Gastrocnemius medialis (tissue), 4 donors: ENCODE measurements at regions of chr6 and their contacts with region 1.

Region 1: GRCh38 chr6:41895300-41896233 is at the start of gene USP49:
- DNase-seq: peak; percentile 83 to 84
- ATAC-seq: peak; percentile 96 to 97
- H3K4me3 ChIP-seq: peak within 1 kb of the TSS; percentile 69 to 91 (median 76)
- H3K27ac ChIP-seq: peak within 1 kb of the TSS; percentile 84 to 91 (median 86)
- H3K4me1 ChIP-seq: peaks cover 8 to 22% of the 10 kb centered on the region in 2 donors
- H3K27me3 ChIP-seq: no peaks in the 10 kb centered on the region
- CTCF ChIP-seq: no peak
- POLR2A ChIP-seq: peak in 1 of 2 donors; percentile 41
- total RNA-seq, gene USP49: 0.27 to 2.8 (median 1.1) TPM

Region 2: GRCh38 chr6:41941280-41942066 is 45.9 kb after region 1 on chr6 and contains the start of gene CCND3:
- in situ Hi-C with region 1: no loop called
- intact Hi-C with region 1: loop called (anchors 1 kb)
- DNase-seq: peak; percentile 78 to 84
- ATAC-seq: peak; percentile 92 to 94
- H3K4me3 ChIP-seq: peak within 1 kb of the TSS; percentile 66 to 97 (median 72)
- H3K27ac ChIP-seq: peak within 1 kb of the TSS; percentile 67 to 79 (median 74)
- H3K4me1 ChIP-seq: peaks cover 21 to 33% of the 10 kb centered on the region in 2 donors
- H3K27me3 ChIP-seq: no peaks in the 10 kb centered on the region
- CTCF ChIP-seq: peak in 1 of 5 experiments; percentile 16
- POLR2A ChIP-seq: peak; percentile 42 to 46
- total RNA-seq, gene CCND3: 28.9 to 48.7 (median 44.7) TPM